CD4-positive, alpha-beta memory T cell (primary cell): ENCODE measurements at regions of chr2 and their contacts with region 1.

Region 1: GRCh38 chr2:102355526-102356380 is at the start of gene IL18R1:
- DNase-seq: peak; percentile 63 to 72 (median 67)
- H3K4me3 ChIP-seq: peak within 1 kb of the TSS; percentile 80 to 81
- H3K4me3 Mint-ChIP-seq: peak within 1 kb of the TSS; percentile 94 to 99 (median 98)
- H3K27ac ChIP-seq: peak within 1 kb of the TSS; percentile 85
- H3K27ac Mint-ChIP-seq: peak within 1 kb of the TSS; percentile 93 to 98 (median 96)
- H3K4me1 ChIP-seq: peaks cover 46% of the 10 kb centered on the region
- H3K4me1 Mint-ChIP-seq: peaks cover 30 to 46% (median 38%) of the 10 kb centered on the region in 4 donors
- H3K27me3 ChIP-seq: no peaks in the 10 kb centered on the region
- H3K27me3 Mint-ChIP-seq: no peaks in the 10 kb centered on the region
- total RNA-seq, gene IL18R1: 9.5 to 11.0 TPM

Region 2: GRCh38 chr2:101759162-101759561 is 596.6 kb before region 1 on chr2:
- CTCF ChIA-PET with region 1: no interaction called
- POLR2A ChIA-PET with region 1: no interaction called
- intact Hi-C with region 1: no loop called
- DNase-seq: no peak
- H3K4me3 ChIP-seq: no peak overlapping the region
- H3K4me3 Mint-ChIP-seq: no peak overlapping the region
- H3K27ac ChIP-seq: no peak overlapping the region
- H3K27ac Mint-ChIP-seq: peak overlapping the region in 1 of 7 donors; percentile 62
- H3K4me1 ChIP-seq: peaks cover 72% of the 10 kb centered on the region
- H3K4me1 Mint-ChIP-seq: peaks cover 52 to 80% (median 66%) of the 10 kb centered on the region in 4 donors
- H3K27me3 ChIP-seq: no peaks in the 10 kb centered on the region
- H3K27me3 Mint-ChIP-seq: no peaks in the 10 kb centered on the region

Region 3: GRCh38 chr2:102020596-102021181 is 335.1 kb before region 1 on chr2:
- CTCF ChIA-PET with region 1: interaction called, 4 read pairs
- POLR2A ChIA-PET with region 1: interaction called, 3 read pairs
- intact Hi-C with region 1: loop called (anchors 1 kb)
- DNase-seq: peak; percentile 70 to 80 (median 72)
- H3K4me3 ChIP-seq: no peak overlapping the region
- H3K4me3 Mint-ChIP-seq: peak overlapping the region in 2 of 8 donors; percentile 24 to 31
- H3K27ac ChIP-seq: no peak overlapping the region
- H3K27ac Mint-ChIP-seq: no peak overlapping the region
- H3K4me1 ChIP-seq: no peaks in the 10 kb centered on the region
- H3K4me1 Mint-ChIP-seq: peaks cover 0 to 6% (median 3%) of the 10 kb centered on the region in 4 donors
- H3K27me3 ChIP-seq: no peaks in the 10 kb centered on the region
- H3K27me3 Mint-ChIP-seq: no peaks in the 10 kb centered on the region

Region 4: GRCh38 chr2:102251042-102251848 is 104.5 kb before region 1 on chr2:
- CTCF ChIA-PET with region 1: interaction called, 7 read pairs
- POLR2A ChIA-PET with region 1: interaction called, 4 read pairs
- intact Hi-C with region 1: loop called (anchors 1 kb)
- DNase-seq: peak; percentile 50 to 58 (median 54)
- H3K4me3 ChIP-seq: peak overlapping the region; percentile 80 to 86
- H3K4me3 Mint-ChIP-seq: peak overlapping the region; percentile 90 to 99 (median 95)
- H3K27ac ChIP-seq: no peak overlapping the region
- H3K27ac Mint-ChIP-seq: peak overlapping the region; percentile 18 to 94 (median 78)
- H3K4me1 ChIP-seq: peaks cover 12% of the 10 kb centered on the region
- H3K4me1 Mint-ChIP-seq: peaks cover 14 to 39% (median 23%) of the 10 kb centered on the region in 4 donors
- H3K27me3 ChIP-seq: no peaks in the 10 kb centered on the region
- H3K27me3 Mint-ChIP-seq: peaks cover 0 to 2% of the 10 kb centered on the region in 2 donors

Region 5: GRCh38 chr2:102291318-102292251 is 64.2 kb before region 1 on chr2:
- CTCF ChIA-PET with region 1: no interaction called
- POLR2A ChIA-PET with region 1: no interaction called
- intact Hi-C with region 1: no loop called
- DNase-seq: no peak
- H3K4me3 ChIP-seq: no peak overlapping the region
- H3K4me3 Mint-ChIP-seq: no peak overlapping the region
- H3K27ac ChIP-seq: no peak overlapping the region
- H3K27ac Mint-ChIP-seq: no peak overlapping the region
- H3K4me1 ChIP-seq: no peaks in the 10 kb centered on the region
- H3K4me1 Mint-ChIP-seq: peaks cover 0 to 5% (median 2%) of the 10 kb centered on the region in 4 donors
- H3K27me3 ChIP-seq: no peaks in the 10 kb centered on the region
- H3K27me3 Mint-ChIP-seq: peaks cover 1 to 2% of the 10 kb centered on the region in 2 donors

Region 6: DNA sequence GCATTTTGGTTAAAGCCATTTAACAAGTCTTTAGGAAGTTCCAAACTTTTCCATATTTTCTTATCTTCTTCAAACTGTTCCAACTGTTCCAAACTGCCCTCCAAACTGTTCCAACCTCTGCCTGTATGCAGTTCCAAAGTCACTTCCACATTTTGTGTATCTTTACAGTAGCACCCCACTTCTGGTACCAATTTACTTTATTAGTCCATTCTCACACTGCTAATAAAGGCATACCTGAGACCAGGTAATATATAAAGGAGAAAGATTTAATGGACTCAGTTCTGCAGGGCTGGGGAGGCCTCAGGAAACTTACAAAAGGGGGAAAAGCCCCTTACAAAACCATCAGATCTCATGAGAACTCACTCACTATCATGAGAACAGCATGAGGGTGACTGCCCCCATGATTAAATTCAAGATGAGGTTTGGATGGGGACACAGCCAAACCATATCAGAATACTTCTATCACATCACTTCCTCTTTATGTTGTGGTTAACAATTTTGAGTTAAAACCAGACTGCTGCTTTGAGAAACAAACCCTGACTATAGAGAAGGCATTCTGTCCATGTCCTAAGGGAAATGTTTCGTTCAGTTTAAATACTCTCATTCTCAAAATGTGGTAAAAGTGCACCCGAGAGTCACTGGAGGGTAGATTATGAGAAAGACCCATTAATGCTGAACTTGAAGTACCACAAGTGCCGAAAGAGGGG is 10.8 kb after region 1 on chr2:
- CTCF ChIA-PET with region 1: interaction called, 21 read pairs
- POLR2A ChIA-PET with region 1: interaction called, 27 read pairs
- intact Hi-C with region 1: loop called (anchors 1 kb)
- DNase-seq: peak; percentile 30 to 55 (median 47)
- H3K4me3 ChIP-seq: peak overlapping the region; percentile 33 to 41
- H3K4me3 Mint-ChIP-seq: peak overlapping the region; percentile 18 to 86 (median 80)
- H3K27ac ChIP-seq: peak overlapping the region; percentile 59
- H3K27ac Mint-ChIP-seq: peak overlapping the region; percentile 81 to 98 (median 93)
- H3K4me1 ChIP-seq: peaks cover 51% of the 10 kb centered on the region
- H3K4me1 Mint-ChIP-seq: peaks cover 37 to 82% (median 64%) of the 10 kb centered on the region in 4 donors
- H3K27me3 ChIP-seq: no peaks in the 10 kb centered on the region
- H3K27me3 Mint-ChIP-seq: no peaks in the 10 kb centered on the region

Region 7: GRCh38 chr2:102424754-102425153 is 69.0 kb after region 1 on chr2:
- CTCF ChIA-PET with region 1: interaction called, 4 read pairs
- POLR2A ChIA-PET with region 1: interaction called, 5 read pairs
- intact Hi-C with region 1: loop called (anchors 5 kb)
- DNase-seq: no peak
- H3K4me3 ChIP-seq: no peak overlapping the region
- H3K4me3 Mint-ChIP-seq: peak overlapping the region in 6 of 8 donors; percentile 15 to 56 (median 42)
- H3K27ac ChIP-seq: no peak overlapping the region
- H3K27ac Mint-ChIP-seq: peak overlapping the region in 5 of 7 donors; percentile 5 to 80 (median 43)
- H3K4me1 ChIP-seq: peaks cover 54% of the 10 kb centered on the region
- H3K4me1 Mint-ChIP-seq: peaks cover 41 to 84% (median 62%) of the 10 kb centered on the region in 4 donors
- H3K27me3 ChIP-seq: no peaks in the 10 kb centered on the region
- H3K27me3 Mint-ChIP-seq: no peaks in the 10 kb centered on the region

Region 8: DNA sequence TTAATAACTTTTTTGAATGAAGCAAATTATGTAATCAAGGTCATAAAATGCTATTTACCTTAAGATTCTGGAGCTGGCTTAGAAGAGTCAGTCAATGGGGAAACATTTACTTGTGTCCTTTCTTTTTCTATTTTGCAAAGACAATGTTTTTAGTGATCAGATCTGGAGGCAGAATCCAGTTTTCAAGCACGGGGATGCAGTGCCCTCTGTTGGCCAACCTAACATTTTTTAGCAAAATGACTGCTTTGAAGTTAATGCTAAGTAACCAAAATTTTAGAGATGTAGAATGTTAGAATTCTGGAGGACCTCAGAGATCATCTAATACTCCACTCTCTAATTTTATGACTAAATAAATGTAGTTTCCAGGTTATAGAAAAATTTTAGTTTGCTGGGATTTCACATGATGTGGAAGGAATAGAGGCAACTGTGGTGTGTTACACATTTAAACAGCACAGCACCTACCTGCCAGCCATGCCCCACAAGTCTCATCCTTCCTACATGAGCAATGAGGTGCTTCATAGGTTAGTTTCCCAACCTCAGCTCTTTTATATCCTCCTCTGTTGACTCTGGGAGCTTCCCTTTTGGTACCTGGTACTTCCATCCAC is 93.7 kb after region 1 on chr2:
- CTCF ChIA-PET with region 1: interaction called, 71 read pairs
- POLR2A ChIA-PET with region 1: no interaction called
- intact Hi-C with region 1: loop called (anchors 1 kb)
- DNase-seq: peak; percentile 44 to 63 (median 49)
- H3K4me3 ChIP-seq: no peak overlapping the region
- H3K4me3 Mint-ChIP-seq: no peak overlapping the region
- H3K27ac ChIP-seq: no peak overlapping the region
- H3K27ac Mint-ChIP-seq: no peak overlapping the region
- H3K4me1 ChIP-seq: no peaks in the 10 kb centered on the region
- H3K4me1 Mint-ChIP-seq: peaks cover 0 to 2% (median 0%) of the 10 kb centered on the region in 4 donors
- H3K27me3 ChIP-seq: no peaks in the 10 kb centered on the region
- H3K27me3 Mint-ChIP-seq: no peaks in the 10 kb centered on the region